ENCODE measurements at regions of chr12 and their contacts with region 1.

Region 1: DNA sequence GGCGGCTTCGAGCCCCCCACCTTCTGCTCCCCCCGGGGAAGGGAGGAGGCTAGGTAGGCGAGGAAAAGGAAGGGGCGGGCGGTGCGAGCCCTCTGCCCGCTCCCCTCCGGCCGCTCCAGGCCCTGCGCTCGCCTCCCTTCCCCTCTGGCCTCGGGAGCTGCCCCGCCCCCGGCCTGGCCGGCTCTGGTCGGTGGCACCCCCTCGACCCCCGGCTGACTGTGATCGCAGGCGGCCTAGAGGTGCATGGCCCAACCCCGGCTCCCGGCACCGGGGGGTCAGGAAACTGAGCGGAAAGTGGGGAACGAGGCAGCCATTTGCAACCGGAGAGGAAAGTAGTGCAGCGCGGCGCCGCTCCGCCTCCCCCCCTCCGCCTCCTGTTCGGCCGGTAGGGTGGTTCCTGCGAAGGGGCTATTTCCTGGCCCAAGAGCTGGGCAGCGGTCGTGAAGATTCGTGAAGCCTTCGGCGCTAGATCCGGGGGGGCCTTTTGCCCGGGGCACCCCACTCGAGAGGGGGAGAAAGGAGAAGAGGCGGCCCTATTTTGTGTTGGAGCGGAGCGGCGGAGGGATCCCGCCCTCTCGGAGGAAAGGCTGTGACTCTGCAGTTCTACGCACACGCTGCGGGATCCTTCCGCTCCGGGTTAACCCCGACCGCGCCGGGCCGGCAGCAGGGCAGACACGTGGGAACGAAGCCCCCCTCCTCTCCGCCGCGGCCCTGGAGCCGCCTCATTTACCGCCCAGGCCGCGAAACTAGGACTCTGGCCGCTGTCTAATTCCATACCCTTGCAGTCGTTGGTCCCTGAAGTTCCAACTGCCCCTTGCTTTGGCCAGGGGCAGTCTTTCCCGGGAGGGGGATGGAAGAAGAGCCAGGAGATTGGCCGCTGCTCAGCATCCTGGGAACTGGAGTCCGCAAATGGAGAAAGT is at the start of gene KMT2D:
- DNase-seq: peak; percentile 72 to 96 (median 87)
- ATAC-seq: peak; percentile 71
- H3K4me3 ChIP-seq: peak within 1 kb of the TSS; percentile 97 to 100
- H3K4me3 Mint-ChIP-seq: peak within 1 kb of the TSS; percentile 98
- H3K27ac ChIP-seq: peak within 1 kb of the TSS; percentile 87 to 97
- H3K27ac Mint-ChIP-seq: peak within 1 kb of the TSS; percentile 98
- H3K4me1 ChIP-seq: peaks cover 45% of the 10 kb centered on the region
- H3K4me1 Mint-ChIP-seq: peaks cover 52% of the 10 kb centered on the region
- H3K27me3 ChIP-seq: no peaks in the 10 kb centered on the region
- H3K27me3 Mint-ChIP-seq: no peaks in the 10 kb centered on the region
- CTCF ChIP-seq: no peak
- total RNA-seq, gene KMT2D: 112 to 127 TPM

Region 2: DNA sequence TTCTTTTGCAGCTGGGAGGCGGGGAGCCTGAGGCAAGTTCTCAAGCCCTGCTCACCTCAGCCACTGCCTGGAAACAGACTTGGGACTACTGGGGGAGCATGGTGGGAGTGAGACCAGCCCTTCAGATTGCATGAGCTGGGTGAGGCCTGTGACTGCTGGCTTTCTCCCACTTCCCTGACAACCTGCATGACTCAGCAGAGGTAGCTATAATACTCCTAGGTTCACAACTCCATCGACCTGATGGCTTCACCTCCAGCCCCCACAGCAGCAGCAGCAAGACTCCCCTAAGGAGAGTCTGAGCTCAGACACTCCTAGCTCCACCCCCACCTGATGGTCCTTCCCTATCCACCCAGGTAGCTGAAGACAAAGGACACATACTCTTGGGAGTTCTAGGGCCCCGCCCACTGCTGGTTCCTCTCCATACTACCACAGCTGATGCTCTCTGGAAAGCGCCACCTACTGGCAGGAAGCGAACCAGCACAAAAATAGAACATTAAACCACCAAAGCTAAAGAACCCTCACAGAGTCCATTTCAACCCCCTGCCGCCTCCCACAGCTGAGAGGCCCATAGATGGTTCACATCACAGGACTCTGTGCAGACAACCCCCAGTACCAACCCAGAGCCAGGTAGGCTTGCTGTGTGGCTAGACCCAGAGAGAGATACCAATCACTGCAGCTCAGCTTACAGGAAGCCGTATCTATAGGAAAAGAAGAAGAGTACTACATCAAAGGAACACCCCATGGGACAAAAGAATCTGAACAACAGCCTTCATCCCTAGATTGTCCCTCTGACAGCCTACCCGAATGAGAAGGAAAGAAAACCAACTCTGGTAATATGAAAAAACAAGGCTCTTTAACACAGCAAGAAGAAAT is 1423.4 kb before region 1 on chr12:
- CTCF ChIA-PET with region 1: no interaction called
- POLR2A ChIA-PET with region 1: no interaction called
- intact Hi-C with region 1: no loop called
- DNase-seq: peak in 6 of 9 experiments; percentile 13 to 54 (median 34)
- ATAC-seq: no peak
- H3K4me3 ChIP-seq: no peak overlapping the region
- H3K4me3 Mint-ChIP-seq: no peak overlapping the region
- H3K27ac ChIP-seq: no peak overlapping the region
- H3K27ac Mint-ChIP-seq: no peak overlapping the region
- H3K4me1 ChIP-seq: no peaks in the 10 kb centered on the region
- H3K4me1 Mint-ChIP-seq: no peaks in the 10 kb centered on the region
- H3K27me3 ChIP-seq: no peaks in the 10 kb centered on the region
- H3K27me3 Mint-ChIP-seq: no peaks in the 10 kb centered on the region
- CTCF ChIP-seq: no peak

Region 3: GRCh38 chr12:49049566-49050413 is 10.7 kb before region 1 on chr12:
- CTCF ChIA-PET with region 1: interaction called, 14 read pairs
- POLR2A ChIA-PET with region 1: no interaction called
- intact Hi-C with region 1: no loop called
- DNase-seq: no peak
- ATAC-seq: no peak
- H3K4me3 ChIP-seq: no peak overlapping the region
- H3K4me3 Mint-ChIP-seq: no peak overlapping the region
- H3K27ac ChIP-seq: no peak overlapping the region
- H3K27ac Mint-ChIP-seq: no peak overlapping the region
- H3K4me1 ChIP-seq: peaks cover under 1% of the 10 kb centered on the region
- H3K4me1 Mint-ChIP-seq: peaks cover 10% of the 10 kb centered on the region
- H3K27me3 ChIP-seq: no peaks in the 10 kb centered on the region
- H3K27me3 Mint-ChIP-seq: no peaks in the 10 kb centered on the region
- CTCF ChIP-seq: no peak

Region 4: GRCh38 chr12:49098035-49098451 is 37.5 kb after region 1 on chr12:
- CTCF ChIA-PET with region 1: interaction called, 81 read pairs
- POLR2A ChIA-PET with region 1: interaction called, 3 read pairs
- intact Hi-C with region 1: loop called (anchors 1 kb)
- DNase-seq: peak; percentile 43 to 75 (median 65)
- ATAC-seq: peak; percentile 82
- H3K4me3 ChIP-seq: no peak overlapping the region
- H3K4me3 Mint-ChIP-seq: no peak overlapping the region
- H3K27ac ChIP-seq: no peak overlapping the region
- H3K27ac Mint-ChIP-seq: no peak overlapping the region
- H3K4me1 ChIP-seq: peaks cover 14% of the 10 kb centered on the region
- H3K4me1 Mint-ChIP-seq: peaks cover 15% of the 10 kb centered on the region
- H3K27me3 ChIP-seq: peaks cover 13 to 16% of the 10 kb centered on the region in 2 experiments
- H3K27me3 Mint-ChIP-seq: peaks cover 21% of the 10 kb centered on the region
- CTCF ChIP-seq: peak; percentile 83

Region 5: GRCh38 chr12:49110464-49111155 is 50.1 kb after region 1 on chr12 and contains the start of gene LMBR1L:
- CTCF ChIA-PET with region 1: interaction called, 30 read pairs
- POLR2A ChIA-PET with region 1: interaction called, 6 read pairs
- intact Hi-C with region 1: loop called (anchors 1 to 5 kb)
- DNase-seq: peak; percentile 93 to 99 (median 96)
- ATAC-seq: peak; percentile 90
- H3K4me3 ChIP-seq: peak within 1 kb of the TSS; percentile 82 to 92
- H3K4me3 Mint-ChIP-seq: peak within 1 kb of the TSS; percentile 98
- H3K27ac ChIP-seq: peak within 1 kb of the TSS; percentile 92 to 97
- H3K27ac Mint-ChIP-seq: peak within 1 kb of the TSS; percentile 98
- H3K4me1 ChIP-seq: peaks cover 18% of the 10 kb centered on the region
- H3K4me1 Mint-ChIP-seq: peaks cover 44% of the 10 kb centered on the region
- H3K27me3 ChIP-seq: no peaks in the 10 kb centered on the region
- H3K27me3 Mint-ChIP-seq: no peaks in the 10 kb centered on the region
- CTCF ChIP-seq: peak; percentile 53
- total RNA-seq, gene LMBR1L: 464 to 497 TPM

Region 6: GRCh38 chr12:49188914-49189367 is 128.4 kb after region 1 on chr12 and contains the start of gene TUBA1A:
- CTCF ChIA-PET with region 1: no interaction called
- POLR2A ChIA-PET with region 1: interaction called, 5 read pairs
- intact Hi-C with region 1: loop called (anchors 2 kb)
- DNase-seq: peak; percentile 90 to 99 (median 96)
- ATAC-seq: peak; percentile 85
- H3K4me3 ChIP-seq: peak within 1 kb of the TSS; percentile 90 to 98
- H3K4me3 Mint-ChIP-seq: peak within 1 kb of the TSS; percentile 97
- H3K27ac ChIP-seq: peak within 1 kb of the TSS; percentile 100
- H3K27ac Mint-ChIP-seq: peak within 1 kb of the TSS; percentile 100
- H3K4me1 ChIP-seq: peaks cover 14% of the 10 kb centered on the region
- H3K4me1 Mint-ChIP-seq: peaks cover 14% of the 10 kb centered on the region
- H3K27me3 ChIP-seq: no peaks in the 10 kb centered on the region
- H3K27me3 Mint-ChIP-seq: no peaks in the 10 kb centered on the region
- CTCF ChIP-seq: no peak
- total RNA-seq, gene TUBA1A: 209 to 225 TPM